GM12878 (cell line): ENCODE measurements at regions of chr1 and their contacts with region 1.

Region 1: DNA sequence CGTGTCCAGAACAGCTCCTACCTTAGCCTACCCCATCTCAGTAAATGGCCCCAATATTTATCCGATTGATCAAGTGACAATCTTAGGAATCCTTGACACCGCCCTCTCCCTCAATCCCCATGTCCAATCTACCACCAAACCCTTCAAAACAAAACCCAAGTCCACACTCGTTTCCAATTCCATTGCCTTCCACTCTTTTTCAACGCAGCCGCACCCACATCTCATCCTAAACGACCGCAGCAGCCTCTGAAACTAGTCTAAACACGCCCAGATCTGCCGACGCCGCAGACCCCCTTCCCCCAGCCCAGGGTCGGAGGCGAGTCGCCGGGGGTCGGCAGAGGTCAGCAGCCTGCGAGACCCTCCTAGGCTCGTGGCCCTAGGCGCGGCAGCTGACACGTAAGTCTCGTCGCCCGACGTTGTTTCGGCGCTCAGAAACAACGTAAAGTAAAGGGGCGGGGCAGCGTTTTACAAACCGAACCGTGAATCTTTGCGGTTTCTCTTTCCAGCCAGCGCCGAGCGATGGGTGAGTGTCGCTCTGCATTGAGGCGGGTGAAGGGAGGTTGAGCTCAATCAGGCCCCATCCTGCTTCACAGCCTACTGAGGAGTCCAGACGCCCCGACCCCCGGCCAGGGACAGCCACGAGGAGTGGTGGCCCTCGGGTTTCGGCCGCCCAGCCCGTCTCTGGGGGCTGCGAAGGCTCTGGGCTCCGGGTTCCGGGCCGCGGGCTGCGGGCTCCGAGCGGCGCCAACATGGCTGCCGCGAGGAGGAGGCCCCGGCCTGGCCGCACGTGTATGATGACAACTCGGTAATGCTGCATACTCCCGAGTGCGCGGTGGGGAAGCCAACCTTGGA is at the start of gene RPS8:
- DNase-seq: peak; percentile 74
- ATAC-seq: peak; percentile 81
- H3K4me3 ChIP-seq: peak within 1 kb of the TSS; percentile 73
- H3K27ac ChIP-seq: peak within 1 kb of the TSS; percentile 92
- H3K4me1 ChIP-seq: peaks cover 13% of the 10 kb centered on the region
- H3K27me3 ChIP-seq: no peaks in the 10 kb centered on the region
- CTCF ChIP-seq: no peak
- EP300 ChIP-seq: no peak
- POLR2A ChIP-seq: peak; percentile 99
- RAD21 ChIP-seq: no peak
- polyA plus RNA-seq, gene RPS8: 2,238 to 3,059 TPM

Region 2: GRCh38 chr1:44423591-44424537 is 351.4 kb before region 1 on chr1:
- CTCF ChIA-PET with region 1: no interaction called
- POLR2A ChIA-PET with region 1: no interaction called
- RAD21 ChIA-PET with region 1: no interaction called
- SMC1A ChIA-PET with region 1: no interaction called
- in situ Hi-C with region 1: no loop called
- intact Hi-C with region 1: no loop called
- DNase-seq: no peak
- ATAC-seq: no peak; the same call in 2 of the 3 replicates
- H3K4me3 ChIP-seq: no peak overlapping the region
- H3K27ac ChIP-seq: no peak overlapping the region
- H3K4me1 ChIP-seq: no peaks in the 10 kb centered on the region
- H3K27me3 ChIP-seq: peaks cover 10 to 31% of the 10 kb centered on the region in 2 experiments
- CTCF ChIP-seq: no peak
- EP300 ChIP-seq: no peak
- POLR2A ChIP-seq: no peak
- RAD21 ChIP-seq: no peak

Region 3: DNA sequence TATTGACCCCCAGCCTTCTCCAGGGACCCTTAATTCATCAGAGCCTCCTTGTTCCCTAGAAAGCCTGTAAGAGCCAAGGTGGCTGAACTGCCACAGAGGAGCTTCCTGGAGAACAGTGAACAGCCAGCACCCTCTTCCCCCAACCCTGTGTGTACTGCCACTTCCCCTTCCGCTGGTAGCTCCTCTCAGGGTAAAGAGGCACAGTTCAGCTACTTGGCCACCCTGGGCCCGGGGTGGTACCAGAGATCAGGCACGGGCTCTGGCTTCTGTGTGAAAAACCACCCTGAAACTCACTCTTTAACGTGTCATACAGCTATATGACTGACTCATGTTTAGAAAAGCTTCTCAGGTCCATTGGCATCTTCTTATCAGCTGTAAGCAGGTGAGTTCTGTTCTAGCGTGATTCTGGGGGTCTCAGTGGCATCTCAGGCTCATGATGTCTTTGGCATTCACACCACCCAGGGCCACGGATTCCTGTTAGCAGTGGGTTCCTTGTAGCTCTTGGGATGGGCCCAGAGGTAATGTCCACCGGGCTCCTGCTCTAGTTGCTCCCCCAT is 78.4 kb before region 1 on chr1:
- CTCF ChIA-PET with region 1: no interaction called
- POLR2A ChIA-PET with region 1: no interaction called
- RAD21 ChIA-PET with region 1: no interaction called
- SMC1A ChIA-PET with region 1: no interaction called
- in situ Hi-C with region 1: no loop called
- intact Hi-C with region 1: no loop called
- DNase-seq: no peak
- ATAC-seq: peak; percentile 74
- H3K4me3 ChIP-seq: no peak overlapping the region
- H3K27ac ChIP-seq: peak overlapping the region; percentile 45
- H3K4me1 ChIP-seq: peaks cover 51% of the 10 kb centered on the region
- H3K27me3 ChIP-seq: no peaks in the 10 kb centered on the region
- CTCF ChIP-seq: no peak
- EP300 ChIP-seq: no peak
- POLR2A ChIP-seq: 0 out of 2 replicates have a peak, but pooled peaks have one; percentile 24
- RAD21 ChIP-seq: no peak

Region 4: GRCh38 chr1:44721485-44722361 is 53.6 kb before region 1 on chr1:
- CTCF ChIA-PET with region 1: interaction called, 5 read pairs
- POLR2A ChIA-PET with region 1: interaction called, 11 read pairs
- RAD21 ChIA-PET with region 1: interaction called, 6 read pairs
- SMC1A ChIA-PET with region 1: interaction called, 8 read pairs
- in situ Hi-C with region 1: no loop called
- intact Hi-C with region 1: no loop called
- DNase-seq: peak; percentile 99
- ATAC-seq: peak; percentile 91
- H3K4me3 ChIP-seq: no peak overlapping the region
- H3K27ac ChIP-seq: peak overlapping the region; percentile 99
- H3K4me1 ChIP-seq: peaks cover 49% of the 10 kb centered on the region
- H3K27me3 ChIP-seq: no peaks in the 10 kb centered on the region
- CTCF ChIP-seq: peak in 1 of 3 experiments; percentile 16; a peak in 1 of 6 replicates
- EP300 ChIP-seq: no peak
- POLR2A ChIP-seq: peak; percentile 97
- RAD21 ChIP-seq: peak; percentile 18; the same call in 1 of the 2 replicates

Region 5: GRCh38 chr1:44747878-44748277 is 27.4 kb before region 1 on chr1:
- CTCF ChIA-PET with region 1: interaction called, 11 read pairs
- POLR2A ChIA-PET with region 1: interaction called, 7 read pairs
- RAD21 ChIA-PET with region 1: interaction called, 3 read pairs
- SMC1A ChIA-PET with region 1: interaction called, 10 read pairs
- in situ Hi-C with region 1: no loop called
- intact Hi-C with region 1: no loop called
- DNase-seq: no peak
- ATAC-seq: no peak
- H3K4me3 ChIP-seq: no peak overlapping the region
- H3K27ac ChIP-seq: no peak overlapping the region
- H3K4me1 ChIP-seq: no peaks in the 10 kb centered on the region
- H3K27me3 ChIP-seq: no peaks in the 10 kb centered on the region
- CTCF ChIP-seq: no peak
- EP300 ChIP-seq: no peak
- POLR2A ChIP-seq: no peak
- RAD21 ChIP-seq: no peak

Region 6: GRCh38 chr1:44760876-44761275 is 14.4 kb before region 1 on chr1:
- CTCF ChIA-PET with region 1: no interaction called
- POLR2A ChIA-PET with region 1: interaction called, 10 read pairs
- RAD21 ChIA-PET with region 1: no interaction called
- SMC1A ChIA-PET with region 1: no interaction called
- in situ Hi-C with region 1: no loop called
- intact Hi-C with region 1: no loop called
- DNase-seq: no peak
- ATAC-seq: no peak
- H3K4me3 ChIP-seq: no peak overlapping the region
- H3K27ac ChIP-seq: no peak overlapping the region
- H3K4me1 ChIP-seq: peaks cover 14% of the 10 kb centered on the region
- H3K27me3 ChIP-seq: no peaks in the 10 kb centered on the region
- CTCF ChIP-seq: no peak
- EP300 ChIP-seq: no peak
- POLR2A ChIP-seq: no peak
- RAD21 ChIP-seq: no peak

Region 7: DNA sequence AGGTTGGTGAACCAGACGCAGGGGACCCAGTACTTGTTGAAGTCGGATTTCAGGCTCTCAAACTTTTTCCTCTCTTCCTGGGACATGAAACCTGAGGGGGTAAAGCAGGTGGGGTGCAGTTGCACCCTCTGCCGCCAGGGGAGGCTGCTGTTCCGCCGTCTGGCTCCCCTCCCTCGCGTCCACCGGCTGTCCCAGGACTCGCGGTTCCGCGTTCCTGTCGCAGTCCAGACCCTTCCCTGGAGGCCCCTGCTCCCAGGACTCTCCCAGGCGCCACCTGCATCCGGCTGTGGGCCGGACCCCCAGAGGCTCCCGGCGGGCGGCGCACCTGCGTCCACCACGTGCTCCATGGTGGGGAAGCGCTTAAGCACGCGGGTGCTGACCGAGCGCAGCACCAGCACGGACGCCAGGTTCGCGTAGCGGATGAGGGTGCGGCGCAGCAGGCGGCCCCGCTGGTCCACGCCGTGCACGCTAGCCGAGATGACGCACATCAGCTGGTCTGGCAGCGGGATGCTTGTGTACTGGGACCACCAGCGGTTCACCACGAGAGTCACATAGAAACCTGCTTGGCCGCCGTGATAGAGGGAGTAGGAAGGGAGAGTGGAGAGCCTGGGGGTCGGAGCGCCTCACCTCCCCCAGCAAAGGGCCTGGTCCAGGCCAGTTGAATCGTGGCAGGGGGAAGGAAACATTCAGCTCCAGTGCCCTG is 11.0 kb after region 1 on chr1:
- CTCF ChIA-PET with region 1: interaction called, 24 read pairs
- POLR2A ChIA-PET with region 1: interaction called, 29 read pairs
- RAD21 ChIA-PET with region 1: interaction called, 4 read pairs
- SMC1A ChIA-PET with region 1: interaction called, 6 read pairs
- in situ Hi-C with region 1: no loop called
- intact Hi-C with region 1: no loop called
- DNase-seq: no peak
- ATAC-seq: peak; percentile 70
- H3K4me3 ChIP-seq: peak overlapping the region; percentile 46; the same call in 1 of the 2 replicates
- H3K27ac ChIP-seq: no peak overlapping the region
- H3K4me1 ChIP-seq: peaks cover 30% of the 10 kb centered on the region
- H3K27me3 ChIP-seq: no peaks in the 10 kb centered on the region
- CTCF ChIP-seq: peak; percentile 85 to 100 (median 99)
- EP300 ChIP-seq: no peak
- POLR2A ChIP-seq: peak; percentile 76
- RAD21 ChIP-seq: peak; percentile 65

Region 8: GRCh38 chr1:44799770-44800584 is 24.7 kb after region 1 on chr1 and contains the start of gene PLK3:
- CTCF ChIA-PET with region 1: interaction called, 5 read pairs
- POLR2A ChIA-PET with region 1: interaction called, 17 read pairs
- RAD21 ChIA-PET with region 1: interaction called, 6 read pairs
- SMC1A ChIA-PET with region 1: interaction called, 3 read pairs
- in situ Hi-C with region 1: no loop called
- intact Hi-C with region 1: no loop called
- DNase-seq: peak; percentile 91
- ATAC-seq: peak; percentile 91
- H3K4me3 ChIP-seq: peak within 1 kb of the TSS; percentile 94
- H3K27ac ChIP-seq: peak within 1 kb of the TSS; percentile 84
- H3K4me1 ChIP-seq: peaks cover 11% of the 10 kb centered on the region
- H3K27me3 ChIP-seq: no peaks in the 10 kb centered on the region
- CTCF ChIP-seq: peak; percentile 92 to 97 (median 95)
- EP300 ChIP-seq: no peak
- POLR2A ChIP-seq: peak; percentile 90
- RAD21 ChIP-seq: peak; percentile 86
- polyA plus RNA-seq, gene PLK3: 1.5 to 1.9 TPM

Region 9: DNA sequence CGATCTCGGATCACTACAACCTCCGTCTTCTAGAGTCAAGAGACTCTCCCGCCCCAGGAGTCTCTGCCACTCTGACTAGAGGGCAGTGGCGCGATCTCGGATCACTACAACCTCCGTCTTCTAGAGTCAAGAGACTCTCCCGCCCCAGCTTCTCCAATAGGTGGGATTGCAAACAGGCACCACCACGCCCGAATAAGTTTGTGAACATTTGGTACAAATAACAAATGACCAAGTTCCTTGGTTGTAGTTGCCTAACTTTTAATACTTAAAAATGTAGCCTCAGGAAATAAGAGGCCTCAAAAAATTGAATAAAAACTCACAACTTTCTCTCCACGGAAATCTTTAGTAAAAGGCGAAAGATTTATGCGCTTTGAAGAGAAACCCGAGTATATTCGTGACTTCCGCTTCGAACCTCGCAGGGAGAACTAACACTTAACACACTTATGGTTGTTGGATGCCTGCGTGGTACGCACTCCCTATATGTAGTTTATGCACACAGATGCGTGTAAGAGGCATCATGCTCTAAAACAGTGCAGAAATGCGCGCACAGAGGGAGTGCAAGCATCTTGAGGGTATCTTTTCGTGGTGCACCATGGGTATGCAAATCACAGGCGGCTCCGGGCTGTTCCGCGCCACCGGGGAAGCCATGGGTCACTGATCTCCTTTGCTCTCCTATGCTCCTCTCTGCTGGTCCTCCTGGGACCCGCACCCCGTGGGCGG is 44.5 kb after region 1 on chr1:
- CTCF ChIA-PET with region 1: no interaction called
- POLR2A ChIA-PET with region 1: interaction called, 5 read pairs
- RAD21 ChIA-PET with region 1: no interaction called
- SMC1A ChIA-PET with region 1: no interaction called
- in situ Hi-C with region 1: no loop called
- intact Hi-C with region 1: loop called (anchors 5 kb)
- DNase-seq: peak; percentile 90
- ATAC-seq: peak; percentile 96
- H3K4me3 ChIP-seq: peak overlapping the region; percentile 36; the same call in 1 of the 2 replicates
- H3K27ac ChIP-seq: peak overlapping the region; percentile 100
- H3K4me1 ChIP-seq: peaks cover 6% of the 10 kb centered on the region
- H3K27me3 ChIP-seq: no peaks in the 10 kb centered on the region
- CTCF ChIP-seq: peak in 2 of 3 experiments; percentile 15 to 29; a peak in 2 of 6 replicates
- EP300 ChIP-seq: peak in 1 of 2 experiments; percentile 1; a peak in 1 of 4 replicates
- POLR2A ChIP-seq: peak; percentile 100
- RAD21 ChIP-seq: peak; percentile 26; the same call in 1 of the 2 replicates

Region 10: DNA sequence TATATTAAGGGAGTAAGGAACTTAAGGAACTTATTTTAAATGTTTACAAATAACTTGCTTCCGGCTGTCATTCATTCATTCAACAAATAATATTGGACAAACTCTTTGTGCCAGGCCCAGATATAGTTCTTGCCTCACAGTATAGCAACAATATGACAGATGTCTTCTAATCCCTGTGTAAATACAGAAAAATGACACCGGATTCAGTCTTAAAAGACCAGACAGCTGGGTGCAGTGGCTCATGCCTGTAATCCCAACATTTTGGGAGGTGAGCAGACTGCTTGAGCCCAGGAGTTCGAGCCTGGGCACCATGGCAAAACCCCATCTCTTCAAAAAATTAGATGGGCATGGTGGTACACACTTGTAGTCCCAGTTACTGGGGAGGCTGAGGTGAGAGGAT is 187.4 kb after region 1 on chr1:
- CTCF ChIA-PET with region 1: no interaction called
- POLR2A ChIA-PET with region 1: no interaction called
- RAD21 ChIA-PET with region 1: no interaction called
- SMC1A ChIA-PET with region 1: no interaction called
- in situ Hi-C with region 1: no loop called
- intact Hi-C with region 1: no loop called
- DNase-seq: no peak
- ATAC-seq: no peak
- H3K4me3 ChIP-seq: no peak overlapping the region
- H3K27ac ChIP-seq: no peak overlapping the region
- H3K4me1 ChIP-seq: no peaks in the 10 kb centered on the region
- H3K27me3 ChIP-seq: no peaks in the 10 kb centered on the region
- CTCF ChIP-seq: no peak
- EP300 ChIP-seq: no peak
- POLR2A ChIP-seq: no peak
- RAD21 ChIP-seq: no peak